Esophagus muscularis mucosa (tissue), 4 donors: ENCODE measurements at regions of chr11 and their contacts with region 1.

Region 1: DNA sequence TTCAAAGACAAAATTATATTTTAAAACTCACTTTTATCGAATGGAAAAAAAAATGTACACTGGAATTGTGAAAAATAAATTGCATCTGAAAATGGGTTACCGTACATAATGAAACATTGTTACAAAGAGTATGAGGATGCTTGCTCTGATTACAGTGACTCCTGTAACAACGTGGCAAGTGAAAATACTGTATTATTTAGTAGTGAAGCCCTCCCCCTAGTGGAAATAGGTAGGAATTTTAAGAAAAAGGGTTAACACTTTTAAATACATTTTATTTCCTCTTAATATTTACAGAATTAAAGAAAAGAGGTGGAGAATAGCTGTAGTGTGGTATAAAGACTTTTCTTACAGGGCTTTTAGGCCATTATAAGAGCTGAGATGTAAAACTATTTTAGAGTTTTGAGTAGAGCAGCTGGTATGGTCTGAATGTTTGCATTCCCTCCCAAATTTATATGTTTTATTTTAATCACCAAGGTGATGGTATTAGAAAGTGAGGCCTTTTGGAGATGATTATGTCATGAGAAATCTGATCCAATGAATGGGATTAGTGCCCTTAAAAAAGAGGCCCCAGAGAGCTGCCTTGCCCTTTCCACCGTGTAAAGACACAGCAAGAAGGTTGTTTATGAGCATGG is 25.2 kb downstream of the FAM76B start:
- DNase-seq: no peak
- H3K4me3 ChIP-seq: no peak overlapping the region
- H3K27ac ChIP-seq: no peak overlapping the region
- H3K4me1 ChIP-seq: peaks cover 0 to 9% (median 0%) of the 10 kb centered on the region in 4 donors
- H3K27me3 ChIP-seq: no peaks in the 10 kb centered on the region
- CTCF ChIP-seq: peak; percentile 64 to 70 (median 68)
- EP300 ChIP-seq: no peak
- POLR2A ChIP-seq: no peak

Region 2: DNA sequence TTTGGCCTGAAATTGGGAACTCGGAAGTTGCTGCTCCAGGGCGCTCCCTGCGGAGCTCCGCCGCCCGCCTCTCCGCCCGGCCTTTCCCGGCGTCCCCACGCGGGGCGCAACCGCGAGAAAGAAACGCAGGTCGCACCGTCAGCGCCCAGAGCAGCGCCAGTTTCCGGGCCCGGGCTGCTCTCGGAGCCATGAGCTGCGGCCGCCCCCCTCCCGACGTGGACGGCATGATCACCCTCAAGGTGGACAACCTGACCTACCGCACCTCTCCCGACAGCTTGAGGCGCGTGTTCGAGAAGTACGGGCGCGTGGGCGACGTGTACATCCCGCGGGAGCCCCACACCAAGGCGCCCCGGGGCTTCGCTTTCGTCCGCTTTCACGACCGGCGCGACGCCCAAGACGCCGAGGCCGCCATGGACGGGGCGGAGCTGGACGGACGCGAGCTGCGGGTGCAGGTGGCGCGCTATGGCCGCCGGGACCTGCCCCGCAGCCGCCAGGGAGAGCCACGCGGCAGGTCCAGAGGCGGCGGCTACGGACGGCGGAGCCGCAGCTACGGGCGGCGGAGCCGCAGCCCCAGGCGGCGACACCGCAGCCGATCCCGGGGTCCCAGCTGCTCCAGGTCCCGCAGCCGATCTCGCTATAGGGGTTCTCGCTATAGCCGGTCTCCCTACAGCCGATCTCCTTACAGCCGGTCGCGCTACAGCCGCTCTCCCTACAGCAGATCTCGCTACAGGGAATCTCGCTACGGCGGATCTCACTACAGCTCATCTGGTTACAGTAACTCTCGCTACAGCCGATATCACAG is 697.1 kb before region 1 on chr11:
- intact Hi-C with region 1: loop called (anchors 5 kb)
- DNase-seq: peak; percentile 95
- H3K4me3 ChIP-seq: peak overlapping the region; percentile 78 to 89 (median 84)
- H3K27ac ChIP-seq: peak overlapping the region; percentile 97 to 98 (median 98)
- H3K4me1 ChIP-seq: peaks cover 11 to 28% (median 26%) of the 10 kb centered on the region in 4 donors
- H3K27me3 ChIP-seq: peaks cover 0 to 7% (median 0%) of the 10 kb centered on the region in 4 donors
- CTCF ChIP-seq: peak; percentile 29 to 75 (median 45)
- EP300 ChIP-seq: no peak
- POLR2A ChIP-seq: no peak

Region 3: DNA sequence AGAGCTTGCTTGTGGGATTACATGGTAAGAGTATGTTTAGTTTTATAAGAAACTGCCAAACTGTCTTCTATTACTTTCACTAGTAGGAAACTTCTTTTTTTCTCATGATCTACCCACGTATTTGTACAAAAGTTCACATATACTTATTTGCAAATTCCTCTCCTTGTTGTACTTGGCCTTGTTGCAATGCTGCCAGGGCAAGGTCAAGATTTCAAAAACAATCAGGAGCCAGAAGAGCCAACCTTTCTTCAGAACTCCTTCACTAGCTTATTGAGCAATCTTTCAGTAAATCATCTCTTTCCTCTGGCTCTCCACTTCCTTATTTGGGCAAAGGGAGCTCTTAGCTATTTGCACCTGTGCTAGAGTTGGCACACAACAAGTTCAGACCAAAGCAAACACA is 688.0 kb before region 1 on chr11:
- intact Hi-C with region 1: loop called (anchors 5 kb)
- DNase-seq: no peak
- H3K4me3 ChIP-seq: no peak overlapping the region
- H3K27ac ChIP-seq: peak overlapping the region in 3 of 4 donors; percentile 26 to 56 (median 28)
- H3K4me1 ChIP-seq: peaks cover 14 to 42% (median 28%) of the 10 kb centered on the region in 4 donors
- H3K27me3 ChIP-seq: no peaks in the 10 kb centered on the region
- CTCF ChIP-seq: no peak
- EP300 ChIP-seq: no peak
- POLR2A ChIP-seq: no peak

Region 4: DNA sequence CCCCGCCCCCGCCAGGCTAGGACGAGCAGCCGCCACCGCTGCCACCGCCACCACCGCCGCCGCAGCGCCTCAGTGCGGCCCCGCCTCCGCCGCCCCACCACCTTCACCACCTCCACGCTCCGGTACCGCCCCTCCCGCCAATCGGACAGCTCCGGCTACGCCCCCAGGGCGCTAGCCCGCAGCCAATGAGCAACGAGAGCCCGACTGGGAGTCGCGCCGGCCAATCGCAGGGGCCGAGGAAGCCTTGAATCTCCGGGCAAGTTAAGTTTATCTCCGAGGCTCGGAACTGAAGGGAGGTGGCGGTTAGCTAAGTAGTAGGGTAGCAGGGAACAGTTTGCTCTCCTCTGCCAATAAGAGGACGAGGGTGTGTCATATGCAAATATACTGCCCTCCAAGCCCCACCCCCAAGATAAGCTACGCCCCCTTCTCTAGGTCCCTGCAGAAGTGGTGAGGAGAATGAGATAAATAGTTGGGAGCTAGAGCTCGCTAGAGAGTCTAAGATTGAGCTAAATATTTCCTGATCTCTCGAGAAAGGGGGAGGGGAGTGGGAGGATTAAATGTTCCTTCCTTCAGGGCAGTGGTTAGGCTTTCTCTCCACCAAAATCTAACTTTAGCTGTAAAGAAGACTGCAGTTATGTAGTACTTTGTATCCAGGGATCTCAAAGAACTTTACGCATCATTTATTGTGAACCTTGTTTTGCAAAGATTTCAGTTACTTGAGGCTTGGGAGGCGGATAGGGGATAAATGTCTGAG is 533.1 kb before region 1 on chr11 and contains the start of gene SESN3:
- intact Hi-C with region 1: loop called (anchors 10 kb)
- DNase-seq: peak; percentile 99
- H3K4me3 ChIP-seq: peak within 1 kb of the TSS; percentile 82 to 93 (median 88)
- H3K27ac ChIP-seq: peak within 1 kb of the TSS; percentile 85 to 92 (median 88)
- H3K4me1 ChIP-seq: peaks cover 14 to 37% (median 34%) of the 10 kb centered on the region in 4 donors
- H3K27me3 ChIP-seq: no peaks in the 10 kb centered on the region
- CTCF ChIP-seq: peak; percentile 10 to 32 (median 18)
- EP300 ChIP-seq: no peak
- POLR2A ChIP-seq: peak; percentile 58
- total RNA-seq, gene SESN3: 18.1 to 22.7 (median 21.4) TPM

Region 5: GRCh38 chr11:95705485-95706124 is 58.8 kb before region 1 on chr11:
- intact Hi-C with region 1: loop called (anchors 5 kb)
- DNase-seq: peak; percentile 95
- H3K4me3 ChIP-seq: no peak overlapping the region
- H3K27ac ChIP-seq: peak overlapping the region; percentile 67 to 79 (median 68)
- H3K4me1 ChIP-seq: peaks cover 12 to 57% (median 53%) of the 10 kb centered on the region in 4 donors
- H3K27me3 ChIP-seq: no peaks in the 10 kb centered on the region
- CTCF ChIP-seq: peak; percentile 90 to 93 (median 91)
- EP300 ChIP-seq: no peak
- POLR2A ChIP-seq: no peak